Transverse colon (tissue), 4 donors: ENCODE measurements at regions of chr6 and their contacts with region 1.

Region 1: DNA sequence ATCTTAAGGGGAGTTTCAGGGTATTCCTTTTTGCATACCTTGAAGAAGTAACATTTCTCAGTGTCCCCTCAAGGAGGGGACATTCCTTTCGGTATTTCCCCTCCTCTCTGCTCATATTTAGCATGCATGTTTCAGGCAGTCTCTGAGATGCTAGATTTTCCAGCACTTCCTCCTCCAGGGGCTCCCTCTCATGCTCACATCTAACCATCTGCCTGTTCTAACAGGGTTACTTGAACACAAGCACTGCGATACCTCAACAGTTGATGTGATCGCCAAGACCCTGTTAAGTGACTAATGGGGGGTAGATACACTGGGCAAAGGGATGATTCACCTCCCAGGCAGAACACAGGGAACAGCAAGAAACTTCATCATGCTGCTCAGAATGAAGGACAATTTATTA is 12.9 kb upstream of the MCM3 start:
- DNase-seq: no peak
- H3K4me3 ChIP-seq: no peak overlapping the region
- H3K27ac ChIP-seq: no peak overlapping the region
- H3K4me1 ChIP-seq: no peaks in the 10 kb centered on the region
- H3K27me3 ChIP-seq: no peaks in the 10 kb centered on the region
- CTCF ChIP-seq: no peak
- EP300 ChIP-seq: no peak
- POLR2A ChIP-seq: no peak

Region 2: GRCh38 chr6:52186480-52186879 is 111.0 kb before region 1 on chr6:
- in situ Hi-C with region 1: no loop called
- intact Hi-C with region 1: no loop called
- DNase-seq: no peak
- H3K4me3 ChIP-seq: no peak overlapping the region
- H3K27ac ChIP-seq: no peak overlapping the region
- H3K4me1 ChIP-seq: no peaks in the 10 kb centered on the region
- H3K27me3 ChIP-seq: no peaks in the 10 kb centered on the region
- CTCF ChIP-seq: no peak
- EP300 ChIP-seq: no peak
- POLR2A ChIP-seq: no peak

Region 3: GRCh38 chr6:52399511-52400312 is 102.3 kb after region 1 on chr6:
- in situ Hi-C with region 1: loop called in 3 of 4 experiments (anchors 5 to 25 kb)
- intact Hi-C with region 1: no loop called
- DNase-seq: peak; percentile 42
- H3K4me3 ChIP-seq: no peak overlapping the region
- H3K27ac ChIP-seq: peak overlapping the region; percentile 23 to 68 (median 57)
- H3K4me1 ChIP-seq: peaks cover 0 to 64% (median 30%) of the 10 kb centered on the region in 4 donors
- H3K27me3 ChIP-seq: no peaks in the 10 kb centered on the region
- CTCF ChIP-seq: peak; percentile 79 to 91 (median 82)
- EP300 ChIP-seq: no peak
- POLR2A ChIP-seq: no peak